GM12878 (cell line): ENCODE measurements at regions of chr2 and their contacts with region 1.

Region 1: DNA sequence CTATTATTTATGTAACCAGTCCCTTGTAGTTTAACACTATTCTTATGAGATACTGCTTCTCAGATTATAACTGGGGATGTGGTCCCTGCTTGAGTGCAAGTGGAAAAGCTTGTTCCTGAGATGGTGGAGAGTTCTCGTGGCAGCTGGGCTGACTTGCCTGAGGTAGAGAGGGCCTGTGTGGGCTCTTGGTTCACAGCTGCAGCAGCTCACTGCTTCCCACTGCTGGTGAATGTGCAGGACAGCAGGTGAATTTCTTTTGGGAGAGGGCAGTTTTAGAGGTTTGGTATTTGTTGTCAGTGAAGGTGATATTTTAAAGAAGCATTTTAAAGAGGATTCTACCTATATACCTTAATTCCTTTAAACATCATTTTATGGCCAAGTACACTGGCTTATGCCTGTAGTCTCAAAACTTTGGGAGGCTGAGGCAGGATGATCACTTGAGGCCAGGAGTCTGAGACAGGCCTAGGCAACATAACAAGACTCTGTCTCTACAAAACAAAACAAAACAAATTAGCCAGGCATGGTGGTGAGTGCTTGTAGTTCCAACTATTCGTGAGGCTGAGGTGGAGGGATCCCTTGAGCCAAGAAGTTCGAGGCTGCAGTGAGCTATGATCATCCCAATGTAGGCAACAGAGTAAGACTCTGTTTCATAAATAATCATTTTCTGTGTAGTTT is 94.8 kb downstream of the MTA3 start:
- DNase-seq: peak; percentile 46
- ATAC-seq: peak; percentile 96
- H3K4me3 ChIP-seq: no peak overlapping the region
- H3K27ac ChIP-seq: no peak overlapping the region; the same call in 1 of the 2 replicates
- H3K4me1 ChIP-seq: peaks cover 3% of the 10 kb centered on the region; the same call in 1 of the 2 replicates
- H3K27me3 ChIP-seq: no peaks in the 10 kb centered on the region
- CTCF ChIP-seq: peak; percentile 98 to 99 (median 99)
- EP300 ChIP-seq: no peak
- POLR2A ChIP-seq: no peak
- RAD21 ChIP-seq: peak; percentile 98

Region 2: GRCh38 chr2:41698678-41699422 is 964.4 kb before region 1 on chr2:
- CTCF ChIA-PET with region 1: no interaction called
- POLR2A ChIA-PET with region 1: no interaction called
- RAD21 ChIA-PET with region 1: no interaction called
- SMC1A ChIA-PET with region 1: no interaction called
- in situ Hi-C with region 1: no loop called
- intact Hi-C with region 1: no loop called
- DNase-seq: no peak
- ATAC-seq: peak; percentile 66
- H3K4me3 ChIP-seq: no peak overlapping the region
- H3K27ac ChIP-seq: no peak overlapping the region
- H3K4me1 ChIP-seq: no peaks in the 10 kb centered on the region
- H3K27me3 ChIP-seq: peaks cover 0 to 3% of the 10 kb centered on the region in 2 experiments; a peak in 2 of 4 replicates
- CTCF ChIP-seq: peak; percentile 66 to 83 (median 80)
- EP300 ChIP-seq: no peak
- POLR2A ChIP-seq: no peak
- RAD21 ChIP-seq: peak; percentile 55

Region 3: GRCh38 chr2:42360890-42361727 is 302.1 kb before region 1 on chr2 and contains the start of gene COX7A2L:
- CTCF ChIA-PET with region 1: no interaction called
- POLR2A ChIA-PET with region 1: no interaction called
- RAD21 ChIA-PET with region 1: no interaction called
- SMC1A ChIA-PET with region 1: no interaction called
- in situ Hi-C with region 1: no loop called
- intact Hi-C with region 1: loop called (anchors 2 kb)
- DNase-seq: peak; percentile 86
- ATAC-seq: peak; percentile 95
- H3K4me3 ChIP-seq: peak within 1 kb of the TSS; percentile 97
- H3K27ac ChIP-seq: peak within 1 kb of the TSS; percentile 97
- H3K4me1 ChIP-seq: peaks cover 10% of the 10 kb centered on the region
- H3K27me3 ChIP-seq: no peaks in the 10 kb centered on the region
- CTCF ChIP-seq: peak in 2 of 3 experiments; percentile 31 to 70; a peak in 3 of 6 replicates
- EP300 ChIP-seq: 0 out of 4 replicates have a peak, but pooled peaks of 1 of the 2 experiments have one; percentile 31
- POLR2A ChIP-seq: peak; percentile 89
- RAD21 ChIP-seq: peak; percentile 33; the same call in 1 of the 2 replicates
- polyA plus RNA-seq, gene COX7A2L: 432 to 532 TPM

Region 4: GRCh38 chr2:42513257-42513918 is 149.9 kb before region 1 on chr2:
- CTCF ChIA-PET with region 1: interaction called, 75 read pairs
- POLR2A ChIA-PET with region 1: interaction called, 11 read pairs
- RAD21 ChIA-PET with region 1: interaction called, 15 read pairs
- SMC1A ChIA-PET with region 1: interaction called, 56 read pairs
- in situ Hi-C with region 1: no loop called
- intact Hi-C with region 1: loop called (anchors 2 kb)
- DNase-seq: no peak
- ATAC-seq: peak; percentile 75
- H3K4me3 ChIP-seq: no peak overlapping the region
- H3K27ac ChIP-seq: no peak overlapping the region
- H3K4me1 ChIP-seq: no peaks in the 10 kb centered on the region; the same call in 1 of the 2 replicates
- H3K27me3 ChIP-seq: no peaks in the 10 kb centered on the region
- CTCF ChIP-seq: peak; percentile 59 to 63 (median 60)
- EP300 ChIP-seq: no peak
- POLR2A ChIP-seq: no peak
- RAD21 ChIP-seq: peak; percentile 68

Region 5: GRCh38 chr2:42598656-42599055 is 64.6 kb before region 1 on chr2:
- CTCF ChIA-PET with region 1: interaction called, 14 read pairs
- POLR2A ChIA-PET with region 1: no interaction called
- RAD21 ChIA-PET with region 1: interaction called, 9 read pairs
- SMC1A ChIA-PET with region 1: interaction called, 20 read pairs
- in situ Hi-C with region 1: no loop called
- intact Hi-C with region 1: no loop called
- DNase-seq: no peak
- ATAC-seq: peak; percentile 64
- H3K4me3 ChIP-seq: peak overlapping the region; percentile 31; the same call in 1 of the 2 replicates
- H3K27ac ChIP-seq: peak overlapping the region; percentile 77
- H3K4me1 ChIP-seq: peaks cover 33% of the 10 kb centered on the region
- H3K27me3 ChIP-seq: no peaks in the 10 kb centered on the region
- CTCF ChIP-seq: peak in 2 of 3 experiments; percentile 12 to 28; a peak in 3 of 6 replicates
- EP300 ChIP-seq: no peak
- POLR2A ChIP-seq: no peak
- RAD21 ChIP-seq: peak; percentile 33; the same call in 1 of the 2 replicates

Region 6: GRCh38 chr2:42722320-42723190 is 59.3 kb after region 1 on chr2:
- CTCF ChIA-PET with region 1: interaction called, 5 read pairs
- POLR2A ChIA-PET with region 1: no interaction called
- RAD21 ChIA-PET with region 1: interaction called, 11 read pairs
- SMC1A ChIA-PET with region 1: interaction called, 12 read pairs
- in situ Hi-C with region 1: no loop called
- intact Hi-C with region 1: no loop called
- DNase-seq: peak; percentile 91
- ATAC-seq: peak; percentile 98
- H3K4me3 ChIP-seq: peak overlapping the region; percentile 10; the same call in 1 of the 2 replicates
- H3K27ac ChIP-seq: peak overlapping the region; percentile 86
- H3K4me1 ChIP-seq: peaks cover 19% of the 10 kb centered on the region
- H3K27me3 ChIP-seq: no peaks in the 10 kb centered on the region
- CTCF ChIP-seq: no peak
- EP300 ChIP-seq: peak; percentile 97
- POLR2A ChIP-seq: no peak
- RAD21 ChIP-seq: 0 out of 2 replicates have a peak, but pooled peaks have one; percentile 23

Region 7: DNA sequence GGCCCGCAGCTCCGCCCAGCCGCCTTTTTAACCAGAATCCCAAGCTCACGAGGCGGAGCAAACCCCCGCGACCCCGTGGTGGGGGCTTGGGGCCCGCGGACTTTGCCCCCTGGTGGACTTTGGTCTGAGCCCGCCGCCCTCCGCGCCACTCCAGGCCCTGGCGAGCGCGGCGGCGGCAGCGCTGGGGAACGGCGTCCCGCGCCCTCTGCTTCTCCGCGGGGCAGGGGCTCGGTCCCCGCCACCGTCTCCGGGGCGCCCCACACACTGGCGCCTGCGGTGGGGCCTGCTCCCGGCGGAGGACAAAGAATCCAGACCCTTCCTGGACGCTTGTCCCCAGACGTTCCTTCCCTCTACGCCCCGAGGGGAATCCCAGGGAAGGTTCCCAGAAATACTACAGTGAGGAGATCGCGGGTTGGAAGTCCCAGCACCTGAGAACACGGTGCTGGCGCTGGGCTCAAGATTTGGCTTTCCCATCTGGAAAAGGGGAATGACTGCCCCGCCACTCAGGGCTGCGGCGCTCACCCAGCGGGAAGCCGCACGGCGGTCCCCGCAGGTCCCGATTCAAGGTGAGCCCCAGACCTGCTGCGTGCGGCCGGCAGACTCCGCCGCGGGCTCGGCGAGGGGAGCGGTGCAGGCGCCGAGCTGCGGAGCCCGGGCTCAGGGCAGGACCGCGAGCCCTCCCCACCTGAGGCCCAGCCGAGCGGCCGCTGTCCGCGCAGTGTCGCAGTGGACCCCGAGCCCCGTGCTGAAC is 129.5 kb after region 1 on chr2 and contains the start of gene HAAO:
- CTCF ChIA-PET with region 1: interaction called, 4 read pairs
- POLR2A ChIA-PET with region 1: interaction called, 3 read pairs
- RAD21 ChIA-PET with region 1: interaction called, 10 read pairs
- SMC1A ChIA-PET with region 1: interaction called, 14 read pairs
- in situ Hi-C with region 1: no loop called
- intact Hi-C with region 1: no loop called
- DNase-seq: no peak
- ATAC-seq: peak; percentile 40
- H3K4me3 ChIP-seq: peak within 1 kb of the TSS; percentile 82
- H3K27ac ChIP-seq: peak within 1 kb of the TSS; percentile 99
- H3K4me1 ChIP-seq: peaks cover 32% of the 10 kb centered on the region
- H3K27me3 ChIP-seq: no peaks in the 10 kb centered on the region
- CTCF ChIP-seq: peak; percentile 9 to 27 (median 12); a peak in 1 of 6 replicates
- EP300 ChIP-seq: no peak
- POLR2A ChIP-seq: peak; percentile 69
- RAD21 ChIP-seq: no peak
- polyA plus RNA-seq, gene HAAO: 4.3 to 6.9 TPM